ENCODE measurements at regions of chr3 and their contacts with region 1.

Region 1: DNA sequence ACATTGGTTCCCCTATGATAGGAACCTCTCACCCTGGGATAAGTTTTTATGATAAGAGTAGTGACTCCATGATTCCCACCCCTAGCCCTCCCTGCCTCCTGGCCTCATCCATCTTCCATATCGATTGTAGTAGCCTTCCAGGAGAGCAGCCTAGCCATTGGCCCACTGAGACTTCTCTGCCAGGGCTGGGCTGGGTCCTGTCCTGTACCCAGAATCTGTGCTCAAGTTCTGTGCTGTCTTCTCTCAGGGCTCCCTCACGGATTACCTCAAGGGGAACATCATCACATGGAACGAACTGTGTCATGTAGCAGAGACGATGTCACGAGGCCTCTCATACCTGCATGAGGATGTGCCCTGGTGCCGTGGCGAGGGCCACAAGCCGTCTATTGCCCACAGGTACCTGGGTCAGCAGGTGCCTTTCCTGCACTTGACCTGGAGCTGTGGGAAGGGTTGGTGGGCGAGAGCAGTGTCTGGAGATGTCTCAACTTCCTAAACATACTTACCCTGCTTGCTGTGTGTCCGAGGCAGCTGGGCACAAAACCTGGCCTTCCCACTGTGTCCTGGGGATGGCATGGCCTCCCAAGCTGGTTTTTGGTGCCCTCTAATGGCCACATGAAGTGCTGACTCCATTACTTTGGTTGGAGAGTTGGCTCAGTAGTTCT is 16.6 kb upstream of the EXOG start:
- DNase-seq: peak; percentile 76
- ATAC-seq: peak; percentile 78

Region 2: DNA sequence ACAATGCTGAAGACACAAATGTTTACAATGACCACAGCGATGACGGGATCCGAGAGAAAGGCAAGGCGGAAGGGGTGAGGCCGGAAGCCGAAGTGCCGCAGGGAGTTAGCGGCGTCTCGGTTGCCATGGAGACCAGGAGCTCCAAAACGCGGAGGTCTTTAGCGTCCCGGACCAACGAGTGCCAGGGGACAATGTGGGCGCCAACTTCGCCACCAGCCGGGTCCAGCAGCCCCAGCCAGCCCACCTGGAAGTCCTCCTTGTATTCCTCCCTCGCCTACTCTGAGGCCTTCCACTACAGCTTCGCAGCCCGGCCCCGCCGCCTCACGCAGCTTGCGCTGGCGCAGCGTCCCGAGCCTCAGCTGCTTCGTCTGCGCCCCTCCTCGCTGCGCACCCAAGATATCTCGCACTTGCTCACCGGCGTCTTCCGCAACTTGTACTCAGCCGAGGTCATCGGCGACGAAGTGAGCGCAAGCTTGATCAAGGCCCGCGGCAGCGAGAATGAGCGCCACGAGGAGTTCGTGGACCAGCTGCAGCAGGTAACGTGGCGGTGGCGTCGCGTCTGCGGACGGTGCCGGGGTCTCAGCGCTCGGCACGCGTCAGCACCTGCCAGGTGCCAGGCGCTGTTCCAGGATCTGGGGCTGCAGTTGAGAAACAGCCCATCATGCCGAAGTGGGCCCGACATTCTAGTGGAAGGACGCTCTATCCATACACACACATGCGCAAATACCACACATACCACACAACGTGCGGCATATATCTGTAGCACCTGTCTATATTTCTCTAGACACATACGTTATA is 440.3 kb before region 1 on chr3 and contains the start of gene DLEC1:
- intact Hi-C with region 1: no loop called
- DNase-seq: peak; percentile 91
- ATAC-seq: peak; percentile 74
- total RNA-seq, gene DLEC1: 0.08 TPM

Region 3: GRCh38 chr3:38117748-38118420 is 361.7 kb before region 1 on chr3:
- intact Hi-C with region 1: loop called (anchors 5 kb)
- DNase-seq: peak; percentile 74
- ATAC-seq: peak; percentile 69

Region 4: GRCh38 chr3:38346587-38347410 is 132.8 kb before region 1 on chr3 and contains the start of gene XYLB:
- intact Hi-C with region 1: loop called (anchors 2 kb)
- DNase-seq: peak; percentile 96
- ATAC-seq: peak; percentile 98
- total RNA-seq, gene XYLB: 0.57 TPM